Panc1 (cell line): ENCODE measurements at regions of chr4 and their contacts with region 1.

Region 1: DNA sequence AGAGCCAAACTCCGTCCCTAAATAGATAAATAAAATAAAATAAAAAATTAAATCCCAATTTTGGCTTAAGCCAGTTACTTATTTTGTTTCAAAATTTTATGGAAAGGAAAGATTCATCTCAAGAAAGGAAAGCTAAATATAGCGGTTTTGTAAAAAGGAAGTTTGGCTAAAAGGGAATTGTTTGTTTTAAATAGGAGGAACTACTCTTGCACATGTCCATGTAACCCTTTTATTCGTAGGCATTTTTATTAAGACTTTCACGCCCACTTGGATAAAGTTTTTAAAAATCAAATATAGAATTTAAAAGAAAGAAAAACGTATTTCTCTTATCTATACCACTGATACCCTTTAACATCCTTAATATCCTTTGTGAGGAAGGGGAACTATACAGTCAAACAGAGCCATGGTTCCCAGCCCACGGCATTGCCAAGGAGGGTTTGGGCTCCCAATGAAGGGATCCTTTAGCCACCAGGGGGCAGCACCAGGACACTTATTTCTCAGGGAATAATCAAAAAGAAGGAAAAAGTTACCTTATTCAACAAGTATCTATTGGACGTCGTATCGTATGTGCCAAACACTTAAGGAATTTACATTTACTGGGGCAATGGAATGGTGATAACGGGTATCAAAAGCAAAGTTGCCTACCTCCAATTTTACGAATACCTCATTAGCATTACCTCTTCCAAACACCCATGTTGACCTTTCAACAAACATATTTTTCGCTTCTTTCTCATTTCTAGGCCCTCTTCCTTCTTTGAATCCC is 27.7 kb downstream of the CDKN2AIP start:
- DNase-seq: peak; percentile 39
- ATAC-seq: peak; percentile 88
- H3K4me3 ChIP-seq: no peak overlapping the region
- H3K27ac ChIP-seq: no peak overlapping the region
- H3K4me1 ChIP-seq: no peaks in the 10 kb centered on the region
- H3K27me3 ChIP-seq: no peaks in the 10 kb centered on the region
- CTCF ChIP-seq: peak; percentile 79

Region 2: GRCh38 chr4:183602557-183603027 is 130.5 kb after region 1 on chr4:
- CTCF ChIA-PET with region 1: no interaction called
- POLR2A ChIA-PET with region 1: no interaction called
- in situ Hi-C with region 1: no loop called
- intact Hi-C with region 1: loop called (anchors 5 kb)
- DNase-seq: no peak
- ATAC-seq: no peak
- H3K4me3 ChIP-seq: no peak overlapping the region
- H3K27ac ChIP-seq: no peak overlapping the region
- H3K4me1 ChIP-seq: no peaks in the 10 kb centered on the region
- H3K27me3 ChIP-seq: no peaks in the 10 kb centered on the region
- CTCF ChIP-seq: no peak; the same call in 1 of the 2 replicates

Region 3: GRCh38 chr4:183722731-183723560 is 250.8 kb after region 1 on chr4:
- CTCF ChIA-PET with region 1: no interaction called
- POLR2A ChIA-PET with region 1: no interaction called
- in situ Hi-C with region 1: no loop called
- intact Hi-C with region 1: loop called (anchors 5 kb)
- DNase-seq: no peak
- ATAC-seq: peak; percentile 65
- H3K4me3 ChIP-seq: peak overlapping the region; percentile 40 to 61
- H3K27ac ChIP-seq: no peak overlapping the region; the same call in 1 of the 2 replicates
- H3K4me1 ChIP-seq: peaks cover 6% of the 10 kb centered on the region; the same call in 1 of the 2 replicates
- H3K27me3 ChIP-seq: no peaks in the 10 kb centered on the region
- CTCF ChIP-seq: no peak; the same call in 1 of the 2 replicates

Region 4: DNA sequence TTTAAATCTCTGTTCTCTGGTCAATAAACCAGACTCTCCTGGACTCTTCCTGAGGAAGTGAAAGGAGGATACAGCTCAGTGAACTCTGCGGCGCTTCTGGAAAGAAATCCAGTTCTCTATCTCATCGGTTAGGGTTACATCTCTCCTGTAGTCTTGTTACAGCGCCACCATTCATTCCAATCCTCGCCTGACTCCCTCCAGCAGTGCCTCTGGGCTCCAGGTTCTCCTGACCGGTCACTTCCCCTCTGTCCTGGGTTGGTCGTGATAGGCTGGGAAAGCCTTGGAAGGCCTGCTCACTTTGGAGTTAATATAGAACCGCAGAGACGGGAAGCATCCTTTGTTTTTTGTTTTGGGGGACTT is 335.9 kb after region 1 on chr4:
- CTCF ChIA-PET with region 1: no interaction called
- POLR2A ChIA-PET with region 1: no interaction called
- in situ Hi-C with region 1: no loop called
- intact Hi-C with region 1: loop called (anchors 10 kb)
- DNase-seq: no peak
- ATAC-seq: peak; percentile 42; the same call in 1 of the 2 replicates
- H3K4me3 ChIP-seq: no peak overlapping the region
- H3K27ac ChIP-seq: no peak overlapping the region
- H3K4me1 ChIP-seq: no peaks in the 10 kb centered on the region
- H3K27me3 ChIP-seq: no peaks in the 10 kb centered on the region
- CTCF ChIP-seq: no peak